ENCODE measurements at regions of chr1 and their contacts with region 1.

Region 1: GRCh38 chr1:9101510-9102146 is 27.3 kb downstream of the GPR157 start:
- DNase-seq: peak; percentile 88
- H3K4me3 ChIP-seq: no peak overlapping the region
- H3K27ac ChIP-seq: no peak overlapping the region
- H3K4me1 ChIP-seq: peaks cover 35% of the 10 kb centered on the region
- CTCF ChIP-seq: peak; percentile 96

Region 2: GRCh38 chr1:8913111-8913856 is 188.3 kb before region 1 on chr1:
- CTCF ChIA-PET with region 1: no interaction called
- POLR2A ChIA-PET with region 1: no interaction called
- intact Hi-C with region 1: loop called (anchors 2 kb)
- DNase-seq: no peak
- H3K4me3 ChIP-seq: no peak overlapping the region
- H3K27ac ChIP-seq: no peak overlapping the region
- H3K4me1 ChIP-seq: peaks cover 2% of the 10 kb centered on the region
- CTCF ChIP-seq: no peak

Region 3: GRCh38 chr1:9037476-9038337 is 63.9 kb before region 1 on chr1:
- CTCF ChIA-PET with region 1: no interaction called
- POLR2A ChIA-PET with region 1: no interaction called
- intact Hi-C with region 1: loop called (anchors 1 kb)
- DNase-seq: peak; percentile 84
- H3K4me3 ChIP-seq: peak overlapping the region; percentile 1
- H3K27ac ChIP-seq: peak overlapping the region; percentile 89
- H3K4me1 ChIP-seq: peaks cover 59% of the 10 kb centered on the region
- CTCF ChIP-seq: no peak

Region 4: DNA sequence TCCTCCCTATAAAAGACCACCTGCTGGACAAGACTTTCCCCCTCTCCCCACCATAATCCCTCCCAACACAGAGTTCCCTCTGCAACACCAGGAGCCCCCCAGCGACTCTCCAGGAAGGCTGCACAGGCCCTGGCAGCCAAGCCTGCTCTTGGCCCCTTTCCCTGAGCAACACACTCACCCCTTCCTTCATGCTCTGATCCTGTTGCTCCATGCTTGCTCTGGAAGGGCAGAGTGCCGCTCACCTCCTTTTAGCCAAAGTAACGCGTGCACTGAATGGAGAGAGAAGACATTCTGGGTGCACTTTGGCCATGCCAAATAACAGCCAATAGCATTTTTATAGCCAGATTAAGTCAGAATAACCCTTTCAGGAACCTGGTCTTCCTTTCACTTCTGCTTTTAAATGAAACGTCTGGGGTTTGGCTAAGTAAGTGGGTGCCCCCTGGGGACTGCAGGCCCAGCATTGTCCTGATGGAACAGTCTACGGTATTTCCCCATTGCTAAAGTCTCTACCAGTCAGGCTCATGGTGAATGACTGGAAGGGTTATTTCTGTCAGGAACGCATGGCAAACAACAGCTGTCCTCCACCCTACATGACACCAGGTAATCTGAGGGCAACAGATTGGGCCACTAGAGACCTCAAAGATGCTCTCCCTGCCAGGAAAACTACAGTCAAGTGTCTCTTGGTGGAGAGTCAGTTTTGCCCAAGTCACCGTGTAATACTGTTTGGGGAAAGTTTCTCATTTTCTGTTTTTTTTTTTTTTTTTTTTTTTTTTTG is 32.1 kb before region 1 on chr1 and contains the start of gene SLC2A5:
- CTCF ChIA-PET with region 1: no interaction called
- POLR2A ChIA-PET with region 1: interaction called, 3 read pairs
- intact Hi-C with region 1: loop called (anchors 1 kb)
- DNase-seq: peak; percentile 97
- H3K4me3 ChIP-seq: peak within 1 kb of the TSS; percentile 83
- H3K27ac ChIP-seq: peak within 1 kb of the TSS; percentile 92
- H3K4me1 ChIP-seq: peaks cover 64% of the 10 kb centered on the region
- CTCF ChIP-seq: peak; percentile 24; the same call in 1 of the 2 replicates
- total RNA-seq, gene SLC2A5: 109 and 112 TPM in 2 replicates

Region 5: DNA sequence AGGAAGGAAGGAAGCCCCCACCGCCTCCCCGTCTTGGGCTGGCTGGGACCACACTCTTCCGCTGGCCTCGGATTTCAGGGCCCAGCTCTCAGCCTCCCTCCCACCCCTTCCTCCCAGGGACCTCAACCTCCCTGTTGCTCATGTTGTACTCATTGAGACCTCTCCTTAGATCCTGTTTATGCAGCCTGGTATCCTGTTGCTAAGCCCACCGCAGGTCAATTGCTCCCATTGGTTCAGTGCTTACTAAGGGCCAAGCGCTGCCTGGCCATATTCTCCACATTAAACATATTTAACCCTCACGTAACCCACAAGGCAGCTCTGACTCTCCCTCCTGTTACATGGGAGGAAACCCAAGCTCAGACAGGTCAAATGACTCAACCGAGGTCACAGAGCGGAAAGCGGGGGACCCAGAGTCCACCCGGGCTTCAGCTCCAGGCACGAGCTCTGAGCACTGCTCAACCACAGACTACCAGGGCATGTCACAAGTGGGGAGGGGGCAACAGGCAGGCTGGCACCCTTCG is 109.7 kb after region 1 on chr1:
- CTCF ChIA-PET with region 1: no interaction called
- POLR2A ChIA-PET with region 1: no interaction called
- intact Hi-C with region 1: no loop called
- DNase-seq: no peak
- H3K4me3 ChIP-seq: no peak overlapping the region
- H3K27ac ChIP-seq: no peak overlapping the region
- H3K4me1 ChIP-seq: no peaks in the 10 kb centered on the region
- CTCF ChIP-seq: no peak

Region 6: DNA sequence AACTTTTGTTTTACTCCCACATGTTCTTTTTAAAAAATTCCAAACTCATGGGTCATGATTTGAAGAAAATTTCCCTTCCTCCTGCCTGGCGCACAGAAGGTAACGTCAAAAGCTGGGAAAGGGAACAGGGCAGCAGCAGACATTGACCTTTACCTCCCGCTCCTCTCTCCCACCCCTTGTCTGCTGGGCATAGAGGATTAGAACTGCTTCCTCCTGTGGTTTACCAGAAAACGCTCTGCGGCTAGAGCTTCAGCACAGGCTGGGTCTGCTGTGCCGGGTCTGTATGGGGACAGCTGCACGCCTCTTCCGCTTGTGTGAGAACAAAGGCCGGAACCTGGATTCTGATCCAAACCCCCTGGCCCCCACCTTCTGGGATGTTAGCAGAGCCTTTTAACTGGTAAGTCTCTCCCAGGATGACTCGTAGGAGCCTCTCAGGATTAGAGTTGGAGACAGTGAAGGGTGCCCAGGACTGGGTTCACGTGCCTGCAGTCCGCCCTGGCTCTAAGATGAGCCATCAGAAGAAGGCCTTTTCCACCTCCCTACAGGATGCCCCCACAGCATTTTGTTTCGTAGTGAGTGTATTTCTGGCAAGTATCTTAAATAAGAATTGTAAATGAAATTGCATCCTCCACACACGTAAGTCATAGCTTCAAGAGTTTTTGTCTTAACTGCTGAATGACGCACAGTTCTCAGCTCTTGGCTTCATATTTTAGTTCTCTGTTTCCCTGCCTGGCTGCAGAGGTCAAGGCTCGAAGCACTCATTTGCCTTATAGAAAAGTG is 138.2 kb after region 1 on chr1:
- CTCF ChIA-PET with region 1: no interaction called
- POLR2A ChIA-PET with region 1: no interaction called
- intact Hi-C with region 1: no loop called
- DNase-seq: peak; percentile 69
- H3K4me3 ChIP-seq: no peak overlapping the region
- H3K27ac ChIP-seq: peak overlapping the region; percentile 32
- H3K4me1 ChIP-seq: peaks cover 20% of the 10 kb centered on the region
- CTCF ChIP-seq: no peak

Region 7: DNA sequence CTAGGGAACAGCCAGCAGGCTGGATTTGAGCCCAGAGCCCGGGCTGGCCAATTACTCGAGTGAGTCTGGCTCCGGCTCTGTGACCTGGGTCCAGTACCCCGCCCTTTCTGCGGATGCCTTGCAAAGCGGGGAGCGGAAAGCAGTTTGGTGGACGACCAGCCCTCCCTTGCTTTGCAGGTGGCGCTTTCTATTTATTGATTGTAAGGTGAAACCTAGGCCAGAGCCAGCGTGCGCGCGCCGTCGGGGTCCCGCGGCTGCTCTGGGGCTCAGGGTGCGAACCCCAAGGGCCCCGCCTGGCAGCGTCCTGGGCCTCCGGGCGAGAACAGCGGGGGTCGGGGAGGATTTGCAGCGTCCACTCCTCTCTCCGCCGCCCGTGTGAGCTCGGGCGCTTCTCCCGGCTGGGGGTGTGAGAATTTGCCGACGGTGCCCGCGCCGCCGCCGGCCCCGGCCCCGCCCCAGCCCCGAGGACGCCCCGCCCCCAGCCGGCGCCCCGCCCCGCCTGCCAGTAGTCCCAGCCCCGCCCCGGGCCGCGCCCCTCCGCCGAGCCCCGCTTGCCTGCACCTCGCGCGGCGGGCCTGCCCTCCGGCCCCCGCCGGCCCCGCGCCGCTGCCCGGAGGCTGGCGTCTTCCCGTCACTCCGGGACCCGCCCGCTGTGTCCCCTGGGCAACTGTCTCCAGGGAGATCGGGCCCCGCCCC is 587.5 kb after region 1 on chr1:
- CTCF ChIA-PET with region 1: no interaction called
- POLR2A ChIA-PET with region 1: no interaction called
- intact Hi-C with region 1: no loop called
- DNase-seq: peak; percentile 85
- H3K4me3 ChIP-seq: peak overlapping the region; percentile 66
- H3K27ac ChIP-seq: no peak overlapping the region
- H3K4me1 ChIP-seq: peaks cover 29% of the 10 kb centered on the region
- CTCF ChIP-seq: no peak

Measured in OCI-LY7 (cell line).